Psoas muscle (tissue), 8 donors: ENCODE measurements at regions of chr17 and their contacts with region 1.

Region 1: GRCh38 chr17:50297407-50297865 is 23.2 kb downstream of the TMEM92 start:
- DNase-seq: peak; percentile 77 to 85
- ATAC-seq: peak; percentile 89 to 97 (median 96)
- H3K4me3 ChIP-seq: no peak overlapping the region
- H3K27ac ChIP-seq: no peak overlapping the region
- H3K4me1 ChIP-seq: no peaks in the 10 kb centered on the region
- H3K27me3 ChIP-seq: no peaks in the 10 kb centered on the region
- CTCF ChIP-seq: peak; percentile 94

Region 2: DNA sequence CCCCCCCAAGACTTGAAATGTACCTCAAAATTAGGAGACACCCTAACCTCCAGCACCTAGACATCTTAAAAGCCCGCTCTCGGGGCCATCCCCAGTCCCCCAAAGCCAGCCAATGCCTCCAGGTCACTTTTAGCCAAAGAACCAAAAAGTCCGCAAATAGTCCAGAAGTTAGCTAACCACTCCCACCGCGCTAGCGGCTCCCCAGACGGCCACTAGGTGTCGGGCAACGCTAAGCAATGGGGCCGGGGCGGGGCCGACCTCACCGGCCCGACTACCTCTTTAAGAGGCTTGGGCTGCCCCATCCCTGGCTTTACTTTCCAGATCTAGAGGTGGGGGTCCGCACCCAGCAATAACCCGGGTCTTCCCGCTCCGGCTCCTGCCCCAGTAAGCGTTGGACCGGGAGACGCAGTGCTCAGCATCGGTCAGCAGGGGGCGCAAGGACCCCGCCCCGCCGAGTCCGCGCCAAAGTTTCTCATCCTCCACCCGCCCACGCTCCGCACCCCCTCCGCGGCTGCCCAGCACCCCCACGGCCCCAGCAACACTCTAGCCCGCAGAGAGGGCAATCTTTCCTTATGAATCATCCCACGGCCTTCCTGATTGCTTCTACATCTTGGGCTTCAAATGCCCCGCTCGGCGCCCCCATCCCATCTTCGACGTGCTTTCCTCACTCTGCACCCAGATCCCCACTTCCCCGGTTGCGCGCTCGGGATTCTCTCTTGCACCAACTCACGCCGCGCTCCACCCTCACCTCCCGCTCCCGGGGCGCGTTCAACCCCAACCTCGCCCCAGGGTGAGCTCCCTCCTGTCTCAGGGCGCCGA is 96.8 kb before region 1 on chr17:
- intact Hi-C with region 1: loop called (anchors 1 to 2 kb)
- DNase-seq: peak; percentile 88 to 93
- ATAC-seq: peak; percentile 83 to 93 (median 86)
- H3K4me3 ChIP-seq: peak overlapping the region; percentile 58
- H3K27ac ChIP-seq: peak overlapping the region; percentile 67
- H3K4me1 ChIP-seq: peaks cover 7% of the 10 kb centered on the region
- H3K27me3 ChIP-seq: peaks cover 0 to 33% (median 0%) of the 10 kb centered on the region in 3 donors
- CTCF ChIP-seq: peak; percentile 100

Region 3: GRCh38 chr17:50443368-50443971 is 146.0 kb after region 1 on chr17:
- intact Hi-C with region 1: no loop called
- DNase-seq: peak in 1 of 2 donors; percentile 62
- ATAC-seq: peak; percentile 82 to 91 (median 86)
- H3K4me3 ChIP-seq: peak overlapping the region; percentile 53
- H3K27ac ChIP-seq: peak overlapping the region; percentile 86
- H3K4me1 ChIP-seq: peaks cover 37% of the 10 kb centered on the region
- H3K27me3 ChIP-seq: no peaks in the 10 kb centered on the region
- CTCF ChIP-seq: no peak